WTC11 (cell line): ENCODE measurements at regions of chr6 and their contacts with region 1.

Region 1: GRCh38 chr6:53544470-53545308 is at the start of gene GCLC:
- DNase-seq: peak; percentile 94
- ATAC-seq: peak; percentile 69
- H3K4me3 Mint-ChIP-seq: peak within 1 kb of the TSS; percentile 99
- H3K27ac Mint-ChIP-seq: peak within 1 kb of the TSS; percentile 96
- H3K4me1 Mint-ChIP-seq: peaks cover 65% of the 10 kb centered on the region
- H3K27me3 Mint-ChIP-seq: peaks cover 25% of the 10 kb centered on the region
- CTCF ChIP-seq: peak; percentile 72
- total RNA-seq, gene GCLC: 33.8 to 47.1 TPM (median 38.6 TPM) in 3 replicates

Region 2: GRCh38 chr6:53556986-53557715 is 12.5 kb after region 1 on chr6:
- CTCF ChIA-PET with region 1: no interaction called
- POLR2A ChIA-PET with region 1: no interaction called
- DNase-seq: no peak
- ATAC-seq: no peak
- H3K4me3 Mint-ChIP-seq: no peak overlapping the region
- H3K27ac Mint-ChIP-seq: no peak overlapping the region
- H3K4me1 Mint-ChIP-seq: no peaks in the 10 kb centered on the region
- H3K27me3 Mint-ChIP-seq: peaks cover 3% of the 10 kb centered on the region; the same call in 1 of the 2 replicates
- CTCF ChIP-seq: no peak

Region 3: GRCh38 chr6:53651764-53652401 is 107.2 kb after region 1 on chr6:
- CTCF ChIA-PET with region 1: interaction called, 13 read pairs
- POLR2A ChIA-PET with region 1: interaction called, 5 read pairs
- DNase-seq: peak; percentile 71
- ATAC-seq: peak; percentile 93
- H3K4me3 Mint-ChIP-seq: peak overlapping the region; percentile 79
- H3K27ac Mint-ChIP-seq: no peak overlapping the region
- H3K4me1 Mint-ChIP-seq: peaks cover 6% of the 10 kb centered on the region
- H3K27me3 Mint-ChIP-seq: peaks cover 20% of the 10 kb centered on the region
- CTCF ChIP-seq: no peak; the same call in 1 of the 2 replicates